ENCODE measurements at regions of chr14 and their contacts with region 1.

Region 1: GRCh38 chr14:23562268-23563203 is 5.1 kb downstream of the AP1G2 start:
- DNase-seq: no peak
- H3K4me3 ChIP-seq: no peak overlapping the region
- H3K27ac ChIP-seq: no peak overlapping the region
- H3K4me1 ChIP-seq: peaks cover 0 to 20% (median 10%) of the 10 kb centered on the region in 4 donors
- H3K27me3 ChIP-seq: peaks cover 0 to 6% of the 10 kb centered on the region in 2 donors
- CTCF ChIP-seq: peak; percentile 73 to 95

Region 2: GRCh38 chr14:23478111-23478759 is 84.3 kb before region 1 on chr14:
- intact Hi-C with region 1: loop called (anchors 2 kb)
- DNase-seq: peak in 1 of 2 donors; percentile 46
- H3K4me3 ChIP-seq: no peak overlapping the region
- H3K27ac ChIP-seq: no peak overlapping the region
- H3K4me1 ChIP-seq: no peaks in the 10 kb centered on the region
- H3K27me3 ChIP-seq: no peaks in the 10 kb centered on the region
- CTCF ChIP-seq: peak; percentile 59 to 79